ENCODE measurements at regions of chr6 and their contacts with region 1.

Region 1: DNA sequence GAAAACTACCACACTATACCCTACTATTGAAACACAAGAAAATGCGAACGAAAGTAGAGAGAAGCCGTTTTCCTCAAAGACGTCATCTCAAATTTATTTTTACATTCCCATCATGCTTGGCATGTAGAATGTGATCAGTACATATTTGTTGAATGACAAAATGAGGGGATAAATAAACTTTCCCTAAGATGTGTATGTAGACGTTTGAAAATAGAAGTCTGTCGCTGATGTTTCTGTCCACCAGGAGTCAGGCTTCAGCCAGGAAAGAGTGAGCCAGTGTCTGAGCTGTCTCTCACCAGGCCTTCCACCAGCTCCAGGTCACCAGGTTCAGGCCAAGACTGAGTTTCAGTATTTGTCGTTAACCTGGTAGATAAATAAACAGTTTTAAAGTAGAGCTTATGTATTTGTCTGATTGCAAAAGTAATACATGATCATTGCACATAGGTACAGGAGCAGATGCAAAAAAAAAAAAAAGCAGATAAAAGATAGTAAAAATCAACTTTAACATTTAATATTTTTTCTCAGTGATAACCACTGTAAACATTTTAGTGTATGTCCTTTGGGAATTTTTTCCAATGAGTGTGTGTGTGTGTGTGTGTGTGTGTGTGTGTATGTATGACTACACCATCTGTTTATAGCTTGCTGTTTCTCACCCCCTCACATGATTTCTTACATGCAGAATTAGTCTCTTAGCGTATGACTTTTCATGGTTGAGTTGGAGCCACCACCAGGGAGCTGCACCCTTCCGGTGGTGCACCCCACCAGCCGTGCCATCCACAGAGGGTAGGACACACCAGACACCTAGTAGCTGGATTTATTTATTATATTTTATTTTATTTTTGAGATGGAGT is 26.2 kb downstream of the WRNIP1 start:
- DNase-seq: peak; percentile 87 to 89 (median 89)
- H3K4me3 ChIP-seq: peak overlapping the region in 1 of 7 experiments; percentile 25
- H3K27ac ChIP-seq: peak overlapping the region in 1 of 2 experiments; percentile 66
- H3K4me1 ChIP-seq: peaks cover 18 to 63% (median 56%) of the 10 kb centered on the region in 4 experiments
- H3K27me3 ChIP-seq: no peaks in the 10 kb centered on the region

Region 2: GRCh38 chr6:2773450-2773849 is 17.9 kb before region 1 on chr6:
- CTCF ChIA-PET with region 1: interaction called, 192 read pairs
- POLR2A ChIA-PET with region 1: no interaction called
- DNase-seq: no peak
- H3K4me3 ChIP-seq: no peak overlapping the region
- H3K27ac ChIP-seq: no peak overlapping the region
- H3K4me1 ChIP-seq: peaks cover 10 to 78% (median 20%) of the 10 kb centered on the region in 4 experiments
- H3K27me3 ChIP-seq: no peaks in the 10 kb centered on the region

Region 3: GRCh38 chr6:2818593-2818992 is 27.2 kb after region 1 on chr6:
- CTCF ChIA-PET with region 1: interaction called, 20 read pairs
- POLR2A ChIA-PET with region 1: interaction called, 4 read pairs
- DNase-seq: peak; percentile 45 to 81 (median 74)
- H3K4me3 ChIP-seq: peak overlapping the region in 3 of 7 experiments; percentile 1 to 38 (median 21)
- H3K27ac ChIP-seq: peak overlapping the region; percentile 92 to 96
- H3K4me1 ChIP-seq: peaks cover 41 to 68% (median 50%) of the 10 kb centered on the region in 4 experiments
- H3K27me3 ChIP-seq: no peaks in the 10 kb centered on the region

Region 4: GRCh38 chr6:2841264-2842138 is 50.2 kb after region 1 on chr6 and contains the start of gene SERPINB1:
- CTCF ChIA-PET with region 1: interaction called, 116 read pairs
- POLR2A ChIA-PET with region 1: interaction called, 23 read pairs
- DNase-seq: peak; percentile 86 to 94 (median 91)
- H3K4me3 ChIP-seq: peak within 1 kb of the TSS; percentile 59 to 97 (median 93)
- H3K27ac ChIP-seq: peak within 1 kb of the TSS; percentile 75 to 91
- H3K4me1 ChIP-seq: peaks cover 39 to 61% (median 56%) of the 10 kb centered on the region in 4 experiments
- H3K27me3 ChIP-seq: no peaks in the 10 kb centered on the region

Region 5: GRCh38 chr6:2853761-2854395 is 62.5 kb after region 1 on chr6:
- CTCF ChIA-PET with region 1: interaction called, 11 read pairs
- POLR2A ChIA-PET with region 1: no interaction called
- DNase-seq: peak; percentile 48 to 77 (median 73)
- H3K4me3 ChIP-seq: peak overlapping the region in 6 of 7 experiments; percentile 16 to 72 (median 42)
- H3K27ac ChIP-seq: peak overlapping the region; percentile 52 to 88
- H3K4me1 ChIP-seq: peaks cover 30 to 58% (median 52%) of the 10 kb centered on the region in 4 experiments
- H3K27me3 ChIP-seq: no peaks in the 10 kb centered on the region

Region 6: GRCh38 chr6:2931970-2932748 is 140.8 kb after region 1 on chr6:
- CTCF ChIA-PET with region 1: interaction called, 27 read pairs
- POLR2A ChIA-PET with region 1: no interaction called
- DNase-seq: peak; percentile 84 to 91 (median 90)
- H3K4me3 ChIP-seq: peak overlapping the region in 4 of 7 experiments; percentile 21 to 67 (median 52)
- H3K27ac ChIP-seq: no peak overlapping the region
- H3K4me1 ChIP-seq: peaks cover 0 to 21% (median 10%) of the 10 kb centered on the region in 4 experiments
- H3K27me3 ChIP-seq: no peaks in the 10 kb centered on the region

Measured in common myeloid progenitor, CD34-positive (primary cell).